AG04449 (cell line): ENCODE measurements at regions of chr10 and their contacts with region 1.

Region 1: DNA sequence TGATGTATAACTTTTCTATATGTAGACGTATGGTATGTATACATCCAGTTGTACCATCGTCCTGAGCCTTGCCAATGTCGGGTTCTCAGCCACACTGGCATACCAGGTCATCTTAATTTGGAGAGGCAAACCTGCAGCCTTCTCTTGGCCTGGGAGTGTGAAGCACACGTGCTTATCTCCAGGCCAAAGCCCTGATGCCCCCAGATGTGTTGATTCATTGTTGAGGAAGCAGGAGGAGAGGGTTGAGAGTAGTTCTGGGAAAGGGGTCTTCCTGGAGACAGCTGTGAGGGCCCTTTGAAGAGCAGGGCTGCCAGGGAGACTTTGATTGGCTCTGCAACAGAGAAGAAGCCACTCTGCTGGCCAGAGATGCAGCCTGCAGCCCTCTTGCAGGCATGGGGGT is 155.6 kb downstream of the ARHGAP21 start:
- DNase-seq: no peak
- H3K4me3 ChIP-seq: no peak overlapping the region
- CTCF ChIP-seq: no peak

Region 2: DNA sequence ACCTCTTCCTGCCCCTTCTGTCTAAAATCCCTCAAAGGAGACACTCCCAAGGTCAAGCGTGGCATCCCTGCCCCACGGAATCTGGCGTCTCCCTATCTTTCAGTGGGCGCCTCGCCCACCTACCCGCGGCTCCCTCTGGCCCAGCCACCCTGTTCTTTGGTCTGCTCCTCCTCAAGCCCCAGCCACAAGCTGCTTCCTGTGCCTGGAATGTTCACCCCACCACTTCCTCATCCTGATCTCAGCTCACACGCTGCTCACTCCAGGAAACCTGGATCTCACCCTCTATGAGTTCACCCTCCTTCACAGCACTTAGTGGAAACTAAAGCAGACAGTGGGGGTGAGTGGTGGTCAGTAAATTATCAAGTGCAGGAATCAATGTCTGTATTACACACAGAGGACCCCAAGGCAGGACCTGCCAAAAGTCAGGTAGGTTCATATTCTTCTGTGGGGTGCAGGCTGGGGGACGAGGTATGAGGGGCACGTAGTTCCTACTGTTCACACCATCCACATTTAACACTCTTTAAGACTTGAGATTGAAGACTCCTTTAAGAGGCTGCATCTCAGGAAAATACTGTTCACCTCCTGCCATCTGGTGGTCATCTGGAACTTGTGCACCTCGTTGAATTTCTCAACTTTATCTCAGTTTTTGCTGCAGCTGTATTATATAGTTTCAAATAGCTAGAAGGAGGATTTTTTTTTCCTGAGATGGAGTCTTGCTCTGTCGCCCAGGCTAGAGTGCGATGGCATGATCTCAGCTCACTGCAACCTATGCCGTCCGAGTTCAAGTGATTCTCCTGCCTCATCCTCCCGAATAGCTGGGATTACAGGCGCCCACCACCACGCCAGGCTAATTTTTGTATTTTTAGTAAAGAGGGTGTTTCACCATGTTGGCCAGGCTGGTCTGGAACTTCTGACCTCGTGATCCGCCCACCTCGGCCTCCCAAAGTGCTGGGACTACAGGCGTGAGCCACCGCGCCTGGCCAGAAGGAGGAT is 11.0 kb before region 1 on chr10:
- CTCF ChIA-PET with region 1: interaction called, 10 read pairs
- POLR2A ChIA-PET with region 1: no interaction called
- DNase-seq: peak; percentile 59
- H3K4me3 ChIP-seq: no peak overlapping the region
- CTCF ChIP-seq: peak; percentile 70

Region 3: DNA sequence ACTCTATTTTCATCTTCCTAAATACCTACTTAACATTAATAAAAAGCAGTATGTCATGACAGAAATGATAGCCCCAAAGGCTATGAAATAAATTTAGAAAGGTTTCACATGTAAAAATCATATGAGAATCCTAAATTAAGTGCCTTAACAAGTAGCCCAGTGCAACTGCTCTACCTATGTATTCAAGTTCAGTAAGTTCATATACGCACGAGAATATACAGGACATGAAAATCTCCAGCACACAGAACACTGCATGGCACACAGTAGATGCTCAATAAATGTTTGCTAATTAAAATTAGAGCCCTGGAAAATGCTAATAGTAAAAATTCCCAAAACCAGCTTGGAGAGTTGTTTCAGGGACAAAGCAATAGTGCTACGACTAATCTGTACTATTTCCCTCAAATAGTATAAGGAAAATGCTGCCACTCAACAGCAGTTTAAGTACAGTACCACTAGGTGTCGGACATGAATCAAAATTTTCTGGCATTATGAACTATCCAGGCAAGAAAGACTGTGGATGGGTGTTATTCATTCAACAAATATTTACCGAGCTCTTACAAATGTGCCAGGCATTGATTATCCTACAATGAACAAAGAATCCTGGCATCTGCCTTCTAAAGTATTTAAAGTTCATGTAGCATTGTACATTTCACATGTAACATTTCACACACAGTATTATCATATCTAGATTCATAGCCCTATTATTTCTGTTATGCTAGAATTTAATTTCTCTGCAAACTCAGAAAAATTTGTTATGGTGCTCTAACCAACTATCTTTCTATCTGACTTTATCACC is 74.8 kb after region 1 on chr10:
- CTCF ChIA-PET with region 1: no interaction called
- POLR2A ChIA-PET with region 1: no interaction called
- DNase-seq: peak; percentile 59
- H3K4me3 ChIP-seq: no peak overlapping the region
- CTCF ChIP-seq: peak; percentile 68